Heart right ventricle (tissue), 16 donors: ENCODE measurements at regions of chr11 and their contacts with region 1.

Region 1: DNA sequence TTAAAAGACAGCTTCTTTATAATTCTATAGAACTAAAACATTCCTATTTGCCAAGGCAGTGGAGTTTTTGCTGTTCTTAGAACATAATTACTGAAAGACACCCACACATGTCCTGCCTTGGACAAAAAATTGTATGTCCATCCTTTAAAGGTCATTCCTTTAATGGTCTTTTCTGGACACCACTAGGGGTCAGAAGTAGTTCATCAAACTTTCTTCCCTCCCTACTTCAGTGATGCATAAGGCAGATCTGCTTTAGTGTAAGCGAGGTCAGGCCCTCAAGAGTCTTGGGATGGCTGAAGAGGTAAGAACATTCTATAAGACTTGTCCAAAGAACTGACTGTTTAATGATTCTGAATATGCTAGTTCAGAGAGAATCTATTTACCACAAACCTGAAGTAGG is 4.3 kb upstream of the OR51V1 start:
- DNase-seq: no peak
- ATAC-seq: peak in 1 of 8 donors; percentile 70
- H3K4me3 ChIP-seq: no peak overlapping the region
- H3K27ac ChIP-seq: no peak overlapping the region
- H3K4me1 ChIP-seq: no peaks in the 10 kb centered on the region
- H3K27me3 ChIP-seq: peaks cover 0 to 21% (median 0%) of the 10 kb centered on the region in 7 donors
- CTCF ChIP-seq: peak in 7 of 9 donors; percentile 18 to 60 (median 47)

Region 2: GRCh38 chr11:5280582-5281102 is 75.9 kb after region 1 on chr11:
- intact Hi-C with region 1: loop called in 1 of 10 experiments (anchors 10 kb)
- DNase-seq: peak; percentile 8 to 16
- ATAC-seq: peak in 4 of 8 donors; percentile 38 to 95 (median 56)
- H3K4me3 ChIP-seq: no peak overlapping the region
- H3K27ac ChIP-seq: no peak overlapping the region
- H3K4me1 ChIP-seq: no peaks in the 10 kb centered on the region
- H3K27me3 ChIP-seq: peaks cover 0 to 2% (median 0%) of the 10 kb centered on the region in 7 donors
- CTCF ChIP-seq: no peak

Region 3: DNA sequence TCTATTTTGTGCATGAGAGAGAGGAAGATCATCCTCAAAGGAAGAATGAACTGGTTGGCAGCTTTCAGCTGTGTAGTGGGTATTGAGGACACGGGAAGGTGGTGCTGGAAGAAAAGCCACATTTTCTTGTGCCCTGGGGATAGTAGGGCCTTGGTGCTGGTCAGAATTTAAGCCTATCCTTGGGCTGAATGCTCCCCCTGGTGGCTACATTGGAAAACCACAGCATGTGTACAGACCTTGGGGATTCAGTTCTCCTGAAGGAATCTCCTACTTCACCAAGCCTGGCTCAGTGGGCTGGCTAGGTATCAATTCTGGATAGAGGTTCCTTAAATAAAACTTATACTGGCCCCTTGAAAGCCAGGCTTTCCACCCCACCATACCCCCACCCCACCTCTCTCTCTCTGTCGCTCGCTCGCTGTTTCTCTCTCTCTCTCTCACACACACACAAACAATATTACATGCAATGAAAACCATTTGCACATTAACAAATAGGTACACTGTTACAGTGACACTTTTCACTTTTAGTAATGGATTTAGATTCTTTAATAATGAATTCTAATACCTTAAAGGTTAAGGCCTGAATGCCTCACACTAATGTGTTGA is 176.1 kb after region 1 on chr11:
- intact Hi-C with region 1: loop called (anchors 1 to 10 kb)
- DNase-seq: peak in 1 of 2 donors; percentile 32
- ATAC-seq: peak in 5 of 8 donors; percentile 52 to 75 (median 66)
- H3K4me3 ChIP-seq: no peak overlapping the region
- H3K27ac ChIP-seq: no peak overlapping the region
- H3K4me1 ChIP-seq: no peaks in the 10 kb centered on the region
- H3K27me3 ChIP-seq: no peaks in the 10 kb centered on the region
- CTCF ChIP-seq: peak; percentile 25 to 73 (median 62)

Region 4: DNA sequence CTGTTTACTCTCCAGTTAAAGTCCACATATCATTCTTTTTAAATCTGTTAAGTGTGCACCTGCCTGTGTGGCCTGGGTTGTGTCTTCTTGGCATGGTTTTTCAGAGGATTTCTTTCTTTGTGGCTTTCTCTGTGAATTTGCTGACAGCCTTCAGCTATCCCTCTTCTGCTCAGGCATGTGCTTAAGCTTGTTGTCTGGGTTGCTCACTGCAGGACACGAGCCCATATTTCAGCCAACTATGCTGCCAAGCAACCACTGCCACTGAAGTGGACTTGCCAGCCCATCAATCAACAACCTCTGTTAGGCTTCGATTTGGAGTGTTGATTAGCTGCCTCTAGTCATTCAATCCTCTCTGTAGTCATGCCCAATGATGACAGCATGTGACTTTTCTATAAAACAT is 262.7 kb after region 1 on chr11:
- intact Hi-C with region 1: no loop called
- DNase-seq: no peak
- ATAC-seq: no peak
- H3K4me3 ChIP-seq: no peak overlapping the region
- H3K27ac ChIP-seq: no peak overlapping the region
- H3K4me1 ChIP-seq: no peaks in the 10 kb centered on the region
- H3K27me3 ChIP-seq: peaks cover 0 to 3% (median 0%) of the 10 kb centered on the region in 7 donors
- CTCF ChIP-seq: no peak